Activated T-helper 1 cell treated with anti-CD3 and anti-CD28 coated beads, Interleukin-12 subunit alpha, Interleukin-12 subunit beta, Interleukin-2, Interleukin-4 antibody, amounts not matched to agents 30 ng/mL and 10 ng/mL and 1 ng/mL, durations not matched to agents 14 hours and 24 hours and 36 hours (primary cell): ENCODE measurements at regions of chr16 and their contacts with region 1.

Region 1: DNA sequence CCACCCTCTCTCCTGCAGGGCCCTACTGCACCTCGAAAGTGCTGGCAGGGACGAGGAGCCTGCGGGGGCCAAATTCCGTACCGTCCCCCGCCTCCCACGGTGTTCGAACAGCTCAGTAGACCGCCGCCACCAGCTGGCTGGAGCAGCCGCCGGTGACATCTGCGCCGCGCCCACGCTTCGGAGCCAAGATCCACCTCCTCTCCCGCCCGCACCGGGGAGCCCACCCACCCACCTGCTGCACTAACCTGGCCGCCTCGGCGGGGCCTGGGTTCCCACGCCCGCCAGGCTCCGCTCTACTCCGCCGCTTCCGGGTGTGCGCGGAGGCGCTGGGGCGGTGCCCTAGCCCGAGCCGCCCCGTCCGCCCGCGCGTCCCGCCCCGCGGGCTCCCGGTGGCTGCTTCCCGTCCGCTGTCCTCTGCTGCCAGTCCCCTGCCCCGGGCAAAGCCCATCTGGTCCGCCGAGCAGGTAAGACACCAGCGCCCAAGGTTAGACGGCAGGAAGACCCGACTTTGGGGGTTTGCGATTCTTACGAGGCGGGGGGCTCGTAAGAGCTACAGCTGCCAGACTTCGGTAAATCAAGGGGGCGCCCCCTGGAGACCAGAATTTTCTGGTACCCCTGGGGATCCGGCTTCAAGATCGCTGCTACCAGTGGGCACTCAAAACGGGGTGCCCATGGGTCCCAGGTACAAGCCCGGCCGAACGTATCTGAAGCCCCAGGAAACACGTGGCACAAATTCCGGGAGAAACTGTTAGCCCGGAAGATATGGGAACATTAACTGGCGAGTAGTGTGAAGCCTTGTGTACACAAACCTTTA is at the starts of genes FBXL8 and TRADD:
- DNase-seq: peak; percentile 84
- H3K4me3 Mint-ChIP-seq: peak within 1 kb of the TSS; percentile 91
- H3K27ac Mint-ChIP-seq: peak within 1 kb of the TSS; percentile 92
- H3K4me1 Mint-ChIP-seq: peaks cover 45% of the 10 kb centered on the region
- H3K27me3 Mint-ChIP-seq: peaks cover 2% of the 10 kb centered on the region
- total RNA-seq, gene FBXL8: 19.3 and 22.4 TPM in 2 replicates
- total RNA-seq, gene TRADD: 29.0 TPM in 2 replicates

Region 2: GRCh38 chr16:66947302-66948065 is 212.3 kb before region 1 on chr16:
- intact Hi-C with region 1: loop called (anchors 1 kb)
- DNase-seq: peak; percentile 78
- H3K4me3 Mint-ChIP-seq: peak overlapping the region; percentile 87
- H3K27ac Mint-ChIP-seq: no peak overlapping the region
- H3K4me1 Mint-ChIP-seq: peaks cover 24% of the 10 kb centered on the region
- H3K27me3 Mint-ChIP-seq: peaks cover 19% of the 10 kb centered on the region

Region 3: GRCh38 chr16:66988197-66988788 is 171.5 kb before region 1 on chr16 and contains the start of gene CES4A:
- intact Hi-C with region 1: loop called (anchors 1 kb)
- DNase-seq: no peak
- H3K4me3 Mint-ChIP-seq: no peak within 1 kb of the TSS
- H3K27ac Mint-ChIP-seq: peak within 1 kb of the TSS; percentile 73
- H3K4me1 Mint-ChIP-seq: peaks cover 32% of the 10 kb centered on the region
- H3K27me3 Mint-ChIP-seq: no peaks in the 10 kb centered on the region
- total RNA-seq, gene CES4A: 33.2 and 34.2 TPM in 2 replicates

Region 4: DNA sequence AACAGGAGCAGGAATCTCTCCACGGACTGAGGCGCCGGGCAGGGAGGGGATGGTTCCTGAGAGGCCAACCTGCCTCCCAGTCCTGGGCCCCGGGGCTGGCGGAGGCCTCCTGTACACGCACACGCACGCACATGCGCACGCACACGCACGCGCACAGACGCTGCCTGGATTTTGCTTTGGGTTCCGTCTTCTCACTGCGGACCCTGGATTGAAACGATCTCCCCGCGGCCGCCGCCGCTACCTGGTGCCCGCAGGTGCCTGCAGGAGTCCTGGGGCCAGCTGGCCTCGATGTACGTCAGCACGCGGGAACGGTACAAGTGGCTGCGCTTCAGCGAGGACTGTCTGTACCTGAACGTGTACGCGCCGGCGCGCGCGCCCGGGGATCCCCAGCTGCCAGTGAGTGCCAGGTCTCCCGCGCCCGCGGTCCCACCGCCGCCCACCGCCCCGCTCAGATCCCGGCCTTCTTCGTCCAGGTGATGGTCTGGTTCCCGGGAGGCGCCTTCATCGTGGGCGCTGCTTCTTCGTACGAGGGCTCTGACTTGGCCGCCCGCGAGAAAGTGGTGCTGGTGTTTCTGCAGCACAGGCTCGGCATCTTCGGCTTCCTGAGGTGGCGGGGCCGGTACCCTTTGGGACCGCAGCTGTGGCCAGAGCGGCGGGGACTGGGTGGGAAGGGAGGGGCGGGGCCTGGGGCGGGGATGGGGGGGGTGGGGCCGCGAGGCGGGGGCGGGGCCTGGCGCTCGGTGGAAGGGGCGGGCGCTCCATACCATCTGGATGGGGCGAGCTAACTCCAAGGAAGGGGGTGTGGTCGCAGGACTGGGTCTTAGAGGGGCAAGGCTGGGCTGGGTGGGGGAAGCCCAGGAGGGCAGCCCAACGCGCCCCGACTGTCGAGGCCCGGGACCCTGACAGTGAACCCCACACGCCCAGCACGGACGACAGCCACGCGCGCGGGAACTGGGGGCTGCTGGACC is 159.1 kb before region 1 on chr16:
- intact Hi-C with region 1: no loop called
- DNase-seq: peak; percentile 55
- H3K4me3 Mint-ChIP-seq: peak overlapping the region; percentile 76
- H3K27ac Mint-ChIP-seq: peak overlapping the region; percentile 88
- H3K4me1 Mint-ChIP-seq: peaks cover 45% of the 10 kb centered on the region
- H3K27me3 Mint-ChIP-seq: no peaks in the 10 kb centered on the region

Region 5: GRCh38 chr16:67055712-67056487 is 103.9 kb before region 1 on chr16:
- intact Hi-C with region 1: loop called (anchors 1 kb)
- DNase-seq: no peak
- H3K4me3 Mint-ChIP-seq: peak overlapping the region; percentile 74
- H3K27ac Mint-ChIP-seq: peak overlapping the region; percentile 96
- H3K4me1 Mint-ChIP-seq: peaks cover 51% of the 10 kb centered on the region
- H3K27me3 Mint-ChIP-seq: no peaks in the 10 kb centered on the region

Region 6: GRCh38 chr16:67183627-67184328 is 24.0 kb after region 1 on chr16 and contains the start of gene MATCAP1:
- intact Hi-C with region 1: loop called (anchors 1 kb)
- DNase-seq: peak; percentile 94
- H3K4me3 Mint-ChIP-seq: peak within 1 kb of the TSS; percentile 62
- H3K27ac Mint-ChIP-seq: no peak within 1 kb of the TSS
- H3K4me1 Mint-ChIP-seq: peaks cover 20% of the 10 kb centered on the region
- H3K27me3 Mint-ChIP-seq: peaks cover 8% of the 10 kb centered on the region
- total RNA-seq, gene MATCAP1: 45.5 and 48.2 TPM in 2 replicates

Region 7: DNA sequence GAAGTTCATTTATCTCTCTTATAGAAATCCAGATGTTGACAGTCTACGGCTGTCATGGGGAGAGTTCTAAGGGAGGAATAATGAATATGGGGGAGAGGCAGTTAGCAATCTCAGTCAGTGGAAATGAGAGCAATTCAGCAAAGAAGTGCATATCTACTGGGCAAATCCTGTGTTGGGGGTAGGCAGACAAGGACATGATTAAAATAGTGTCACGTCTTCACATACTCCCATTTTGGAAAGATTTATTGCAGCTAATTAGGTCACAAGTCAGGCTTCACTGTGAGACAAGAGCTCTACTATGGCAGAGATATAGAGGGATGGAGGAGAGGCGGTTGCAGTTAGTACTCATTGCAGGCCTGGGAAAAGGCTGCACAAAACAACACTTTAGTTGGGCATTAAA is 196.6 kb after region 1 on chr16:
- intact Hi-C with region 1: no loop called
- DNase-seq: no peak
- H3K4me3 Mint-ChIP-seq: no peak overlapping the region
- H3K27ac Mint-ChIP-seq: no peak overlapping the region
- H3K4me1 Mint-ChIP-seq: no peaks in the 10 kb centered on the region
- H3K27me3 Mint-ChIP-seq: peaks cover 17% of the 10 kb centered on the region